WTC11 (cell line): ENCODE measurements at regions of chr2 and their contacts with region 1.

Region 1: GRCh38 chr2:68594674-68595492 is 48.5 kb upstream of the PROKR1 start:
- DNase-seq: peak; percentile 59
- ATAC-seq: peak; percentile 65
- H3K4me3 Mint-ChIP-seq: no peak overlapping the region
- H3K27ac Mint-ChIP-seq: no peak overlapping the region
- H3K4me1 Mint-ChIP-seq: 0 out of 2 replicates have a peak, but pooled peaks cover 2% of the 10 kb centered on the region
- H3K27me3 Mint-ChIP-seq: no peaks in the 10 kb centered on the region; the same call in 1 of the 2 replicates
- CTCF ChIP-seq: peak; percentile 72

Region 2: DNA sequence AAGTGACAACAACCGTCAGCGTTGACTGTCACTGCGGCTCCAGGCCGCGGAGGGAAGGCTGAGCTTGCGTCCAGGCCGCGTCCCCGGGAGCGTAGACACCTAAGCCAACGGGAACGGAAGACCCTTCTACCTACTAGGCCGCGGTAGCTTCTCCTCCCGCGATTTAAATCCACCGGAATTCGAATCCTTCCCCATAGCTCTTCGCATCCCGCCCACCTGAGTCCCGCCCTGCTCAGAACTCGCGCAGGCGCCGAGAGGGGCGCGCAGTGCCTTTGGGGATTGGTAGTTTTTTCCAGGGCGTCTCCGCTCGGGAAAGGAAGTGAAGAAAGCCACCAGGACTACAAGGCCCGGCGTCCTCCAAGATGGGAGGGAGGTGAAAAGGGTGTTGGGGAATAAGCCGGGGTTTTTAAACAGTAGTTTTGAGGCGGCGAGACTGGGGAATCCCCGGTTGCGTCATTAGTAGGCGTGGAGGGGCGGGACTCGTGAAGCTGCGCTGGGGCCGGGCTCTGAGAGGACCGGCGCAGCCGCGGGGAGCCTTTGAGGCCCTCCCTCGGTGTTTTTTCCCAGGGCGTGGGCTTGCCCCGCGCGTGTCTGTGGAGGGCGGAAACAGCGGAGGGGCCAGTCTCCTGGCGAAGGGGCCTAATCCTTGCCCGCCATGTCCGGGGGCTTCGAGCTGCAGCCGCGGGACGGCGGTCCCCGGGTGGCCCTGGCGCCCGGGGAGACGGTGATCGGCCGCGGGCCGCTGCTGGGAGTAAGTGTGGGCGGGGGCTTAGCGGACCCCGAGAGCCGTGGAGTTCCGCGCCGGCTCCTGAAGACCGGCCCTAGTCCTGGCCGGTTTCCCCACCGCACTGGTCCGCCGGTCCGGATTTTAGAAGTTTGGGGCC is 127.6 kb before region 1 on chr2 and contains the starts of genes APLF and FBXO48:
- CTCF ChIA-PET with region 1: interaction called, 21 read pairs
- POLR2A ChIA-PET with region 1: no interaction called
- DNase-seq: peak; percentile 94
- ATAC-seq: peak; percentile 99
- H3K4me3 Mint-ChIP-seq: peak within 1 kb of the TSS; percentile 97
- H3K27ac Mint-ChIP-seq: peak within 1 kb of the TSS; percentile 77
- H3K4me1 Mint-ChIP-seq: peaks cover 10% of the 10 kb centered on the region; the same call in 1 of the 2 replicates
- H3K27me3 Mint-ChIP-seq: no peaks in the 10 kb centered on the region
- CTCF ChIP-seq: no peak
- total RNA-seq, gene APLF: 2.7 to 4.0 TPM (median 3.9 TPM) in 3 replicates
- total RNA-seq, gene FBXO48: 1.3 to 1.5 TPM (median 1.3 TPM) in 3 replicates

Region 3: DNA sequence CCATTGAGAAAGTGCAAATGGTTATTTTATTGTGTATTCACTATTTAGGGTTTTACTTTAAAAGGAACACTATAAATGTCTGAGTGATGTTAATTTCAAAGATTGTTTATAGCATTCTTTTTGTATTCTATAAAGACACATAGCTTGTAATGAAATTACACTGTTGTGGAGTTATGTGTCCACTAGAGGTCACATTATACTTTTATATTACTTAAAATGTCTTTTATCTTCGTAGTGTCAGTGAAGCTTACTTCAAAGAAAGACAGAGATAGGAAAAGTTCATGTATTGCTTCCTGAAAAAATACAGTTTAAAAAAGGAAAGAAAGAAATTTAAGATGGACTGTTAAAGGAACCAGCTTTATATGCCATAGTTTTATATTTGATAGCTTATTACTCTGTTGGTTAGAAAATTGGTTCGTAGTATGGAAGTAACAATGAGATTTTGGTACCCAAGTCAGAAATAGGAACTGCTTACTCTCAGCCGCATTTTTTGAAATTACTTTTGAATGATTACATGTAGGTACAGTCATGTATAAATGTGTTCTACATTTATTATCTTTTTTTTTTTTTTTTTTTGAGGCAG is 107.0 kb before region 1 on chr2:
- CTCF ChIA-PET with region 1: interaction called, 21 read pairs
- POLR2A ChIA-PET with region 1: no interaction called
- DNase-seq: no peak
- ATAC-seq: no peak
- H3K4me3 Mint-ChIP-seq: no peak overlapping the region
- H3K27ac Mint-ChIP-seq: no peak overlapping the region
- H3K4me1 Mint-ChIP-seq: no peaks in the 10 kb centered on the region
- H3K27me3 Mint-ChIP-seq: no peaks in the 10 kb centered on the region
- CTCF ChIP-seq: no peak

Region 4: DNA sequence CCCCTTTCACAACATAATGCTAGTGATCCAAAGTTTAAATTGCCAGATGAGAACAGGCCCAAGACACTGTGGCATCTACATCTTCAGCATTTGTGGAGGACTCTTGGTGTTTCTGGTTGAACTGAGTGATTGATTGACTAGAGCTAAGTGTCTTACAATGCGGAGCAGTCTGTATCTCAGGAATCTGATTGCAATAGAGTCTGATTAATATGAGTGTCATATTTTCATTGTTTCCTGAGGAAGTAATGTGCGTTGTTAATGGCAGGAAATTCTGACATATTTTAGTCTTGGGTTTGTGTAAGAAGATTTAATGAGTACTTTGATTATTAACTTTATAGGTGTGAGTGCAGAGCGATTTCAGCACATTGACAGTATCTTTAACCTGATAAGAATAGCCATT is 33.5 kb before region 1 on chr2:
- CTCF ChIA-PET with region 1: interaction called, 18 read pairs
- POLR2A ChIA-PET with region 1: no interaction called
- DNase-seq: no peak
- ATAC-seq: no peak
- H3K4me3 Mint-ChIP-seq: no peak overlapping the region
- H3K27ac Mint-ChIP-seq: no peak overlapping the region
- H3K4me1 Mint-ChIP-seq: no peaks in the 10 kb centered on the region
- H3K27me3 Mint-ChIP-seq: no peaks in the 10 kb centered on the region
- CTCF ChIP-seq: no peak

Region 5: DNA sequence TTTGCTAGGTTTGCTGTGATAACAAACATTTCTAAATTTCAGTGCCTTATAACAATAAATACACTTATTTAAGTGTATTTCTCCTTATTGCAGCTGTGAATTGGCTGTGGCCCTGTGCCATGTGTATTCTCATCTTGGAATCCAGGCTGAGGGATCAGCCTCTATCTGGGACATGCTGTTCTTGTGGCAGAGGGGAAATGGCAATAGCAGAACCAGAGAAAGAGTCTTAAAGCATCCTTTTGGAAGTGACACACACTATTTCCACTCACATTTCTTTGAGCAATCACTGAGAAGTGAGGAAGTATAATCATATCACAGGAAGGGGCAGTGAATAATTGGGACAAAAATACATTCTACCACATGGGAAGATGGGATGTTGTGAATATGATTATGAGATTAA is 17.7 kb before region 1 on chr2:
- CTCF ChIA-PET with region 1: interaction called, 20 read pairs
- POLR2A ChIA-PET with region 1: no interaction called
- DNase-seq: no peak
- ATAC-seq: no peak
- H3K4me3 Mint-ChIP-seq: no peak overlapping the region
- H3K27ac Mint-ChIP-seq: no peak overlapping the region
- H3K4me1 Mint-ChIP-seq: no peaks in the 10 kb centered on the region
- H3K27me3 Mint-ChIP-seq: no peaks in the 10 kb centered on the region
- CTCF ChIP-seq: no peak

Region 6: DNA sequence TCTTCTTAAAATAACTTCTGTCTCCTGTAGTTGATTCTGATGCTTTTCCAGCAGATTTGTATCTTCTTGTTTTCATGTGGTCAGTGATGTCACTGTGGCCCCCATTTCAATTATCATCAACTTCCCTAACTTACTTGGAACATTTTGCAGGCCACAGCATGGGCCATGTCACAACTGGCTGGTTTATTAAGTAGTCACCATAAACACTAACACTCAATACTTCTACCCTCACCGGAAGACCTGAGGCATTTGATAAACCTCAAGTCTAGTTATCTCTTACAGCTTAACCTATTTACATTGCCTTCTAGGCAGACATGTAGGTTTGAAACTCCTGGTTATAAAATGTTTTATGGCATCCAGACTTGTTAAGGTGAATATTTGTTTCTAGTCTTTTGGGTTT is 11.1 kb after region 1 on chr2:
- CTCF ChIA-PET with region 1: interaction called, 11 read pairs
- POLR2A ChIA-PET with region 1: no interaction called
- DNase-seq: no peak
- ATAC-seq: no peak
- H3K4me3 Mint-ChIP-seq: no peak overlapping the region
- H3K27ac Mint-ChIP-seq: no peak overlapping the region
- H3K4me1 Mint-ChIP-seq: peaks cover 6% of the 10 kb centered on the region
- H3K27me3 Mint-ChIP-seq: no peaks in the 10 kb centered on the region
- CTCF ChIP-seq: no peak

Region 7: GRCh38 chr2:68643011-68643873 is 48.4 kb after region 1 on chr2 and contains the start of gene PROKR1:
- CTCF ChIA-PET with region 1: interaction called, 26 read pairs
- POLR2A ChIA-PET with region 1: no interaction called
- DNase-seq: peak; percentile 72
- ATAC-seq: peak; percentile 73
- H3K4me3 Mint-ChIP-seq: peak within 1 kb of the TSS; percentile 80
- H3K27ac Mint-ChIP-seq: no peak within 1 kb of the TSS
- H3K4me1 Mint-ChIP-seq: peaks cover 15% of the 10 kb centered on the region
- H3K27me3 Mint-ChIP-seq: peaks cover 45% of the 10 kb centered on the region
- CTCF ChIP-seq: no peak
- total RNA-seq, gene PROKR1: 2.6 to 4.4 TPM (median 2.8 TPM) in 3 replicates

Region 8: DNA sequence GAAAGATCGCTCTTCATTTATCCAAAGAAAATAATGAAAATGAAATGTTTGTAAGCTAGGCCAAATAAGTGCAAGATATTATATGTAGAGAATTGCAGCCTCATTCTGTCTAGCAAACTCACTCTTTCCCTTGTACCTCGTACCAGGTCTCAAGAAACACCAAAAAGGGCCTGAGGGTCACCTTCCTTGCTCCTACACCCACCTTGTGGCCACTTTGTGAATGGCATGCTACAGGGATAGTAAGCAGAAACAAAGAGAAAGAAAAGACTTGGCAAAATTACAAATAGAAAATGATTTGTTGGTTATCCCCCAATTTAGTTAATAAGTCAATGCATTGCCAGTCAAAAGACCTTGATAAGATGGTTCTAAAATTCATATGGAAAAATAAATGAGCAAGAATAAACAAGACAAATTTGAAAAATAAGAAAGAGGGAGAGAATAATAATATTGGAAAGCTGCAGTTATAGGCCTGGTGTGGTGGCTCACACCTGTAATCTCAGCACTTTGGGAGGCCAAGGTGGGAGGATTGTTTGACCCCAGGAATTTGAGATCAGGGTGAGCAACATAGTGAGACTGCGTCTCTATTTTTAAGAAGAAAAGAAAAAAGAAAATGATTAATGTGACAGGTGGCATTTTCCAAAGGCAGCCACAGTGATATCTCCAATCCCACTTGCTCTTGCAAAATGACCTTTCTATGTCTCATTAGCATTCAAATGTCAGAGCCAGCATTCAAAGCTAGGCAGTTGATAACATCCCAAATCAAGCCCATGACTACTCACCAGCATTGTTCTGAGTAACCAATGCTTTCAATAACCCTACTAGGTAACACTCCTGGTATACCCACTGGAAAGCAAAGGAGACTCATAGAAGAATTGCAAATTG is 315.2 kb after region 1 on chr2:
- CTCF ChIA-PET with region 1: no interaction called
- POLR2A ChIA-PET with region 1: no interaction called
- DNase-seq: peak; percentile 80
- ATAC-seq: peak; percentile 63
- H3K4me3 Mint-ChIP-seq: no peak overlapping the region
- H3K27ac Mint-ChIP-seq: peak overlapping the region; percentile 85
- H3K4me1 Mint-ChIP-seq: peaks cover 27% of the 10 kb centered on the region
- H3K27me3 Mint-ChIP-seq: no peaks in the 10 kb centered on the region
- CTCF ChIP-seq: peak; percentile 90

Region 9: GRCh38 chr2:70233926-70234325 is 1639.0 kb after region 1 on chr2:
- CTCF ChIA-PET with region 1: no interaction called
- POLR2A ChIA-PET with region 1: no interaction called
- DNase-seq: no peak
- ATAC-seq: no peak
- H3K4me3 Mint-ChIP-seq: no peak overlapping the region
- H3K27ac Mint-ChIP-seq: no peak overlapping the region
- H3K4me1 Mint-ChIP-seq: no peaks in the 10 kb centered on the region
- H3K27me3 Mint-ChIP-seq: no peaks in the 10 kb centered on the region
- CTCF ChIP-seq: no peak